AG04449 (cell line): ENCODE measurements at regions of chr1 and their contacts with region 1.

Region 1: DNA sequence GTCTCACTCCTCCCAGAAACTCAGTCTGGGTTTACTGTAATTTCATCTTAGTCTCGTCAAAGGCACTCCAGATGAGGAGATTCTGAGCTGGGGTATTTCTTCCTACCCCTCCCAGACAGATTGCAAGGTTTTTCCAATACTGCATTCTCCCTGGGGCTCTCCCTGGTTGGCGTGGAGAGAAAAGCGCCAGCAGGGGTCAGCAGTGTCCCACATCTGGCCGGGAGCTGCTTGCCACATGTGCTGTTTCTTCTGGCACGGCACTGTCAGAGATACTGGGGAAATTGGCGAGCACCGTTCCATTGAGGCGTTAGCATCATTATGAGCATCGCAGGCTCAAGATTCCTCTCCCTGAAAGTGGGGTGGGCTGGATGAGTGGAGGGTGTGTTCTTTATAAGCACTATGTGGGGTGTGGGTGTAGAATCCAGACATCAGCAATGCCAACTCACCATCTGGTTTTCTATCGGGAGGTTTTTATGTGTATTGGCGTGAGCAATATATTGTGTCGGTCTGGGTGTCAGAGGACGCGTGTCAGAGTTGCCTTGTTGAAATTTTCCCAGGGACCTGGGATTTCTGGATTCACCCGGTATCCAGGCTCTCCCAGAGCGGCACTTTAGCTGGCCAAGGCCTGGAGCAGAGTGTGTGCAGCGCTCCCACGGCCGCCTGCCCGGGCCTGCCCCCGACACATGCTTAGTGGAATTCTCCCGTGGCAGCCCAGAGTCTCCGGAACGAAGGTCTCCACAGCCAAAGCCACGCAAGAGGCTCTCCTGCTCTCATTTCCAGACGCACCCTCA is 8.0 kb upstream of the NAV1 start:
- DNase-seq: peak; percentile 40
- H3K4me3 ChIP-seq: no peak overlapping the region
- CTCF ChIP-seq: peak; percentile 87

Region 2: GRCh38 chr1:201320163-201320788 is 210.7 kb before region 1 on chr1:
- CTCF ChIA-PET with region 1: no interaction called
- POLR2A ChIA-PET with region 1: no interaction called
- DNase-seq: no peak
- H3K4me3 ChIP-seq: no peak overlapping the region
- CTCF ChIP-seq: no peak

Region 3: GRCh38 chr1:201481761-201482493 is 49.0 kb before region 1 on chr1:
- CTCF ChIA-PET with region 1: interaction called, 23 read pairs
- POLR2A ChIA-PET with region 1: no interaction called
- DNase-seq: no peak
- H3K4me3 ChIP-seq: no peak overlapping the region; the same call in 1 of the 2 replicates
- CTCF ChIP-seq: peak; percentile 93

Region 4: DNA sequence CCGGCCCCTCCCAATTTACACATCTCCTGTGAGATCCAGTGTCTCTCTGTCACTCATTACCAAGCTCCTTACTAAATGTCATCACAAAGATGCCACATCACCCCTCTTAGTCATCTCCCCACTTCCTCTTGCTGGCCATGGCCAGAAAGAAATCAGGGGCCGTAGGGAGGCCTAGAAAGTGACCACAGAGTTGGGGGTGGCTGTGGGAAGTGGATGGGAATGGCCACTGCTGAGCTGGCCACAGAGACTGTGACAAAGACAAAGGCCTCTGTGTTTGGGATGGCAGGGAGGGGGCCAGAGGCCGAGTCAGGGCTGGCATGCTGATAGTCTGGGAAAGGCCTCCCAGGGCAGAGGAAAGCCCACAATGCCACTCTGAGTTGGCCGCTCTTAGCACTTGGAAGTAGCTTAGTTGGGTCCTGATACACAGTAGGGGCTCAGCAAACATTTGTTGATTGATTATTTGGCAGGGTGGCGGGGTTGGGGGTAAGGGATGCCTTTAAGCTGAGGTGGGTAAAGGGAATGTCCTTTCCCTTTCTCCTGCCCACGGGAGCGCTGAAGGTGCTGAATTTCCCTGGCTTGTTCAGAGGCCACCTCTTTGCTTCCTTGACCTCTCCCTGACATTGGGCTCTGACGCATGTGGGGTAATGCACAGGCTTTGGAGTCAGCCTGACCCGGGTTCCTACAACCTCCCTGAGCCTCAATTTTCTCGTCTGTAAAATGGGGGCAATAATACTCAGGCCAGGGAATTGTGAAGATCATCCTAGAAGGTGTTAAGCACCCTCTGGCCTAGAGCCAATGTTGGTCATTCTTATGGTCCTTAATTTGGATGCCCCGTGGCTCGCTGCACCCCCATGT is 21.2 kb after region 1 on chr1:
- CTCF ChIA-PET with region 1: interaction called, 22 read pairs
- POLR2A ChIA-PET with region 1: interaction called, 3 read pairs
- DNase-seq: no peak
- H3K4me3 ChIP-seq: no peak overlapping the region
- CTCF ChIP-seq: no peak

Region 5: DNA sequence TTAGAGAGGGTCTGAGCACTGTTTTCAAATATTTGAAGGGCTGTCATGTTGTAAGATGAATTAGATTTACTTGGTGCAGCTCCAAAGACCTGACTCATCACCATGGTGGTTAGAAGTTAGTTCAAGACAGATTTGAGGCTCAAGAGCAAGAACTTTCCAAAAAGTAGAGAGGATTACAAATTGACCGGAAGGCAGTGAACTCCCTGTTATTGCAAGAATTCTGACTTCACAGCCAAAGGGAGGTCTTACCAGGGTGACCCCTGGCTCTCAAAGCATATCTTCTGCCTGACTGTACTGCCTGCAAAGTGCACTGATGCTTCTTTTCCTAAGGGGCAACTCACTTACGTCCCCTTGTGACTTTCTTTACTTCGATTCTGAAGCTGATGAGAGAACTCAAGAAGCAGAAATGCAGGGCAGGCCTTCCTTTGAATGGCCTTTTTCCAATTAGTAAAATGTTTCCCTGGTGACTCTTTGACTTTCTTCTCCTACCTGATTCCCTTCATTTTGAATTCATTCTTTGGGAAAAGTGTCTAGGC is 94.4 kb after region 1 on chr1:
- CTCF ChIA-PET with region 1: interaction called, 11 read pairs
- POLR2A ChIA-PET with region 1: no interaction called
- DNase-seq: peak; percentile 92
- H3K4me3 ChIP-seq: no peak overlapping the region
- CTCF ChIP-seq: peak; percentile 35

Region 6: GRCh38 chr1:201696217-201696761 is 165.4 kb after region 1 on chr1:
- CTCF ChIA-PET with region 1: interaction called, 255 read pairs
- POLR2A ChIA-PET with region 1: no interaction called
- DNase-seq: peak; percentile 74
- H3K4me3 ChIP-seq: peak overlapping the region; percentile 9; the same call in 1 of the 2 replicates
- CTCF ChIP-seq: no peak